ENCODE measurements at regions of chr2 and their contacts with region 1.

Region 1: DNA sequence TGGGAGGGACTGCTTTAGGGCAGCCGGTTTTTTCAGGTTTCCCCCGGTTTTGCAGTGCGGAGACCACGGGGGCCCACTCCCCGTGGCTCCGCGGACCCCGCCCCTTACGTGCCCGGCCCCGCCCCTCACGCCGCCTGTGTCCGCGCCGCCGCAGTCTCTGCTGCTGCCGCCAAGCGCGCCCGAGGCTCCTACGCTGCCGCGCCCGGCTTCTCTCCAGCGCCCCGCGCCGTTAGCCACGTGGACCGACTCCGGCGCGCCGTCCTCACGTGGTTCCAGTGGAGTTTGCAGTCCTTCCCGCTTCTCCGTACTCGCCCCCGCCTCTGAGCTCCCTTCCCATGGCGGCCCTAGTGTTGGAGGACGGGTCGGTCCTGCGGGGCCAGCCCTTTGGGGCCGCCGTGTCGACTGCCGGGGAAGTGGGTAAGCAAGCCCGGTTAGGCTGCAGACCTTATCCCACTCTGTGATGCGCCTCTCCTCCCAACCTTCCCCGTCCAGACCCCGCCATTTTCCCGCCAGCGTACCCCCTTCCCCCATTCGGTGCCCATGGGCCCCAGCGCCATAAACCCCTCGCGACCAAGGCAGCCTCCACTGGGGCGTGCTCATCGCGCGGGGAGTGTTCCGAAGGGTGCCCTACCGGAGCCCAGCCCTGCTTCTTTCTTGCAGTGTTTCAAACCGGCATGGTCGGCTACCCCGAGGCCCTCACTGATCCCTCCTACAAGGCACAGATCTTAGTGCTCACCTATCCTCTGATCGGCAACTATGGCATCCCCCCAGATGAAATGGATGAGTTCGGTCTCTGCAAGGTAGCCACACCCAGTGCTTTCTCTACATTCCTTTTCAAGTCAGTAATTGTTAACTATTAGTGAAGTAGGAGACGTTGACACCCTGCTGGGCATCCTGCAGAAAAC is at the start of gene CAD:
- DNase-seq: peak; percentile 75 to 94 (median 84)
- ATAC-seq: peak; percentile 74
- H3K4me3 ChIP-seq: peak within 1 kb of the TSS; percentile 87
- H3K4me3 Mint-ChIP-seq: peak within 1 kb of the TSS; percentile 98
- H3K27ac ChIP-seq: peak within 1 kb of the TSS; percentile 67 to 75
- H3K27ac Mint-ChIP-seq: peak within 1 kb of the TSS; percentile 93
- H3K4me1 ChIP-seq: peaks cover 31% of the 10 kb centered on the region
- H3K4me1 Mint-ChIP-seq: peaks cover 45% of the 10 kb centered on the region
- H3K27me3 ChIP-seq: no peaks in the 10 kb centered on the region
- H3K27me3 Mint-ChIP-seq: no peaks in the 10 kb centered on the region
- CTCF ChIP-seq: no peak
- total RNA-seq, gene CAD: 20.0 to 20.3 TPM

Region 2: GRCh38 chr2:26970244-26970920 is 247.1 kb before region 1 on chr2 and contains the start of gene MAPRE3:
- CTCF ChIA-PET with region 1: no interaction called
- POLR2A ChIA-PET with region 1: no interaction called
- intact Hi-C with region 1: loop called in 1 of 2 experiments (anchors 5 kb)
- DNase-seq: peak; percentile 51 to 97 (median 74)
- ATAC-seq: peak; percentile 83
- H3K4me3 ChIP-seq: peak within 1 kb of the TSS; percentile 76
- H3K4me3 Mint-ChIP-seq: peak within 1 kb of the TSS; percentile 95
- H3K27ac ChIP-seq: no peak within 1 kb of the TSS
- H3K27ac Mint-ChIP-seq: peak within 1 kb of the TSS; percentile 55
- H3K4me1 ChIP-seq: peaks cover 20% of the 10 kb centered on the region
- H3K4me1 Mint-ChIP-seq: peaks cover 30% of the 10 kb centered on the region
- H3K27me3 ChIP-seq: peaks cover 3 to 10% of the 10 kb centered on the region in 2 experiments
- H3K27me3 Mint-ChIP-seq: peaks cover 27% of the 10 kb centered on the region
- CTCF ChIP-seq: no peak
- total RNA-seq, gene MAPRE3: 3.4 to 4.5 TPM

Region 3: GRCh38 chr2:27133905-27134780 is 83.3 kb before region 1 on chr2 and contains the start of gene PREB:
- CTCF ChIA-PET with region 1: no interaction called
- POLR2A ChIA-PET with region 1: interaction called, 6 read pairs
- intact Hi-C with region 1: loop called (anchors 1 to 2 kb)
- DNase-seq: peak; percentile 94 to 99 (median 98)
- ATAC-seq: peak; percentile 97
- H3K4me3 ChIP-seq: peak within 1 kb of the TSS; percentile 90
- H3K4me3 Mint-ChIP-seq: peak within 1 kb of the TSS; percentile 98
- H3K27ac ChIP-seq: peak within 1 kb of the TSS; percentile 55 to 79
- H3K27ac Mint-ChIP-seq: peak within 1 kb of the TSS; percentile 94
- H3K4me1 ChIP-seq: peaks cover 30% of the 10 kb centered on the region
- H3K4me1 Mint-ChIP-seq: peaks cover 19% of the 10 kb centered on the region
- H3K27me3 ChIP-seq: no peaks in the 10 kb centered on the region
- H3K27me3 Mint-ChIP-seq: no peaks in the 10 kb centered on the region
- CTCF ChIP-seq: no peak
- total RNA-seq, gene PREB: 12.3 to 12.6 TPM

Region 4: GRCh38 chr2:27264753-27265535 is 47.5 kb after region 1 on chr2:
- CTCF ChIA-PET with region 1: interaction called, 3 read pairs
- POLR2A ChIA-PET with region 1: interaction called, 4 read pairs
- intact Hi-C with region 1: loop called in 1 of 2 experiments (anchors 10 kb)
- DNase-seq: peak; percentile 32 to 89 (median 51)
- ATAC-seq: peak; percentile 63
- H3K4me3 ChIP-seq: peak overlapping the region; percentile 54
- H3K4me3 Mint-ChIP-seq: peak overlapping the region; percentile 73
- H3K27ac ChIP-seq: no peak overlapping the region
- H3K27ac Mint-ChIP-seq: no peak overlapping the region
- H3K4me1 ChIP-seq: peaks cover 42% of the 10 kb centered on the region
- H3K4me1 Mint-ChIP-seq: peaks cover 26% of the 10 kb centered on the region
- H3K27me3 ChIP-seq: peaks cover 48 to 55% of the 10 kb centered on the region in 2 experiments
- H3K27me3 Mint-ChIP-seq: peaks cover 39% of the 10 kb centered on the region
- CTCF ChIP-seq: peak; percentile 59

Region 5: DNA sequence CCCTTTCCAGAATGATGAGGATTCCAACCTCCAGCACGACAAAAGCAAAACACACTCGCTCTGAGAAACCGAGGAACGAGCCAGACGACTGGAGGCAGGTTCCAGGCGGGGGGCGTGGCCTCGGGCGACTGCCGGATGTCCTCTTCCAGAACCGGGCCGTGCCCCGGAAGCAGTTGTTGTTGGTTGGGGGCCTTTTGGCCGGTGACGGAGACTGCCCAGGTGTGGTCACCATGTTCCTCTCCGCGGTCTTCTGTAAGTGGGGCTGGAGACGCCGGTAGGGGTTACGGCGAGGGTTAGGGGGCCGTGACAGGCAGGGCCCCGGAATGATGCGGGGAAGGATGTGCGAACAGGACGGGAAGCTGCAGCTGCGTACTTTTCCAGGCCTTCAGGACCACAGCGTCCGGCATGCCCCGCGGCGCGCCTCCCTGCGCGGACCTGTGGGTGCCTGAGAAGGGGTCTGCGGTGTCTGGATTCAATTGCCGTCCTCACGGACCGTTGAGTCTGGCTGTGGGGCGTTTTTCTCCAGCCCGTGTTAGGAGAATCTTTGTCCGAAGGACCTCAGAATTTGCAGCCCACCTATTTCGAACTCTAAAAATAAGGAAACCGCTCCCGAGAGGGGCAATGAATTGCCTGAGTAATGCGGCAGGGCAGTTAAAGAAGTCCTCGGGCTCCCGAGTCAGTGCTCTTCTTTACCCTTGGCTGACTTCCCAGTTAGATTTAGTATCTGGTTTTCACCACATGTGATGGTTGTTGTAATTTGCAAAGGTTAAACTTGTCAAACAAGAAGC is 554.3 kb after region 1 on chr2 and contains the start of gene MRPL33:
- CTCF ChIA-PET with region 1: no interaction called
- POLR2A ChIA-PET with region 1: no interaction called
- intact Hi-C with region 1: loop called in 1 of 2 experiments (anchors 10 kb)
- DNase-seq: peak; percentile 85 to 95 (median 89)
- ATAC-seq: peak; percentile 89
- H3K4me3 ChIP-seq: peak within 1 kb of the TSS; percentile 73
- H3K4me3 Mint-ChIP-seq: peak within 1 kb of the TSS; percentile 100
- H3K27ac ChIP-seq: peak within 1 kb of the TSS; percentile 74 to 91
- H3K27ac Mint-ChIP-seq: peak within 1 kb of the TSS; percentile 100
- H3K4me1 ChIP-seq: peaks cover 15% of the 10 kb centered on the region
- H3K4me1 Mint-ChIP-seq: peaks cover 59% of the 10 kb centered on the region
- H3K27me3 ChIP-seq: no peaks in the 10 kb centered on the region
- H3K27me3 Mint-ChIP-seq: no peaks in the 10 kb centered on the region
- CTCF ChIP-seq: no peak
- total RNA-seq, gene MRPL33: 33.1 to 37.2 TPM